ENCODE measurements at regions of chr6 and their contacts with region 1.

Region 1: DNA sequence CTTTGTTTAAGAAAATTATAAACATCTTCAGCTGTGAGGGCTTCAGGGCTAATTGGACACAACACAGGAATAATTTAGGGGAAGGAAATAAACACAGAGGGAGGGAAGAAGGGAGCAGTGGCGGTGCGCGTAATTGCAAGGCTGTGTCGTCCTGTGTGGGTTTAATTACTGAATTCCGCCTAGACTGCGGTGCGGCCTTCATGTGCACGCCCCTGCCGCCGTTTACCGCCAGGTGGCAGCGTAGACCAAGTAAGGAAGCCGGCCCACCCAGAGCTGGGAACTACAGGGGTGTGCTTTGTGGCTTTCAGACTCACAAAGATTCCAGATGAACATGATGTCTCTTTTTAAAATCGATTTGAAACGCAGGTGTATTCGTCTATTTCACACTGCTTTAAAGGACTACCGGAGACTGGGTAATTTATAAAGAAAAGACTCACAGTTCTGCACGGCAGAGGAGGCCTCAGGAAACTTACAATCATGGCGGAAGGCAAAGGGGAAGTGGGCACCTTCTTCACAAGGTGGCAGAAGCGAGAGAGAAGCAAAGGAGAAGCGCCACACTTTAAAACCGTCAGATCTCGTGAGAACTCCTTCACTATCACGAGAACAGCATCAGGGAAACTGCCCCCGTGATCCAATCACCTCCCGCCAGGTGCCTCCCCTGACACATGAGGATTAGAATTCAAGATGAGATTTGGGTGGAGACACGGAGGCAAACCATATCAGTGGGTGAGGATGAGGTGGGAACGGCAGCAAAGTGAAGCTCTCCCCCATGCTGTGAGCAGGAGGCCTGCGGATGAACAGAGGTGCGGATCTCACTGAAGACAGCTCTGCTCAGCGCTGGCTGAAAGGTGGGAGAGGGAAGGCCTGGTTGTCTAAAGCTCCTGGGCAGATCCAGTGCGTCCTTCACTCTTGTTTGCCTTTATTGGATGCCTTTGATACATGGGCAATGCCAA is 222.0 kb upstream of the PDE10A start:
- DNase-seq: peak; percentile 82 to 94 (median 91)
- ATAC-seq: peak; percentile 89 to 92
- H3K4me3 ChIP-seq: no peak overlapping the region
- H3K27ac ChIP-seq: no peak overlapping the region
- H3K4me1 ChIP-seq: no peaks in the 10 kb centered on the region
- H3K27me3 ChIP-seq: no peaks in the 10 kb centered on the region

Region 2: GRCh38 chr6:165987483-165988301 is 102.6 kb after region 1 on chr6:
- intact Hi-C with region 1: loop called in 1 of 4 experiments (anchors 10 kb)
- DNase-seq: peak; percentile 92 to 94 (median 93)
- ATAC-seq: peak; percentile 90 to 92
- H3K4me3 ChIP-seq: peak overlapping the region; percentile 41
- H3K27ac ChIP-seq: no peak overlapping the region
- H3K4me1 ChIP-seq: no peaks in the 10 kb centered on the region
- H3K27me3 ChIP-seq: no peaks in the 10 kb centered on the region

Region 3: GRCh38 chr6:166097915-166098522 is 212.9 kb after region 1 on chr6:
- intact Hi-C with region 1: loop called in 2 of 4 experiments (anchors 5 kb)
- DNase-seq: peak; percentile 75 to 91 (median 89)
- ATAC-seq: peak; percentile 94 to 97
- H3K4me3 ChIP-seq: peak overlapping the region; percentile 7
- H3K27ac ChIP-seq: no peak overlapping the region
- H3K4me1 ChIP-seq: no peaks in the 10 kb centered on the region
- H3K27me3 ChIP-seq: no peaks in the 10 kb centered on the region

Region 4: GRCh38 chr6:166105341-166106075 is 220.4 kb after region 1 on chr6:
- intact Hi-C with region 1: loop called in 3 of 4 experiments (anchors 2 to 5 kb)
- DNase-seq: no peak
- ATAC-seq: no peak
- H3K4me3 ChIP-seq: no peak overlapping the region
- H3K27ac ChIP-seq: no peak overlapping the region
- H3K4me1 ChIP-seq: no peaks in the 10 kb centered on the region
- H3K27me3 ChIP-seq: peaks cover 4% of the 10 kb centered on the region